ENCODE measurements at regions of chr3 and their contacts with region 1.

Region 1: GRCh38 chr3:150763122-150763841 is at the start of gene SIAH2:
- DNase-seq: peak; percentile 88 to 95
- H3K4me3 ChIP-seq: peak within 1 kb of the TSS; percentile 69
- H3K27ac ChIP-seq: peak within 1 kb of the TSS; percentile 84
- H3K4me1 ChIP-seq: peaks cover 55% of the 10 kb centered on the region
- H3K27me3 ChIP-seq: no peaks in the 10 kb centered on the region
- CTCF ChIP-seq: no peak
- total RNA-seq, gene SIAH2: 19.4 and 20.3 TPM in 2 replicates

Region 2: DNA sequence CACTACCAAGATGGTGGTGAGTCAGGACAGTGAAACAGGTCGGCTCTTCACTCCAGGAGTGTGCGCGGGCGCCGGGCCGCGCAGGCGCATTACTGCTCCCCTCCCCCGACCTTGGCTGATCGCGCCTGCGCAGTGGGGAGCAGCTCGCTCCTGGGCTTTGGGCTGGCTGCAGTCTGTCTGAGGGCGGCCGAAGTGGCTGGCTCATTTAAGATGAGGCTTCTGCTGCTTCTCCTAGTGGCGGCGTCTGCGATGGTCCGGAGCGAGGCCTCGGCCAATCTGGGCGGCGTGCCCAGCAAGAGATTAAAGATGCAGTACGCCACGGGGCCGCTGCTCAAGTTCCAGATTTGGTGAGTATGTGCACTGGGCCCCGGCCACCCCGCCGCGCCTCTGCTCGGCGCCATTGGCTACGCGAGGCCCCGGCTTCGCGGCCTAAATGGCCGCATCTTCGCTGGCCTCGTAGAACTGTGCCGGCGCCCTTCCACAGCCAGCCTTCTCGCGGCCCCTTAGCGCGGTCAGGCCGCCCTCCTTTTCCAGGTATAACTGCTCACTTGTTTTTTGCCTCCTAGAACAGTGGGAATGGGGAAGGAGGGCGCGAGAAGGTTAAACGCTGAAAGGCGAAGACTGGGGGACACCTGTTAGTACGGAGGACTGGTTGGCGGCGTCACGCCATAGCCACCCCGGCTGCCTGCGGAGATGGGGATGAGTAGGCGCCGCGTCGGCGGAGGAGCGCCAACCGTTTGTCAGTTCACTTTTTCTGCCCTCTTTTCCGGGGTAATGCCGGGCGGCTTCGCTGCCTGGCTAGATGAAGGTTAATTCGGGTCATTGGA is 159.9 kb before region 1 on chr3 and contains the start of gene SELENOT:
- CTCF ChIA-PET with region 1: no interaction called
- POLR2A ChIA-PET with region 1: interaction called, 6 read pairs
- intact Hi-C with region 1: loop called (anchors 5 kb)
- DNase-seq: peak; percentile 88 to 98
- H3K4me3 ChIP-seq: peak within 1 kb of the TSS; percentile 94
- H3K27ac ChIP-seq: peak within 1 kb of the TSS; percentile 93
- H3K4me1 ChIP-seq: peaks cover 53% of the 10 kb centered on the region
- H3K27me3 ChIP-seq: no peaks in the 10 kb centered on the region
- CTCF ChIP-seq: peak; percentile 31; the same call in 1 of the 2 replicates
- total RNA-seq, gene SELENOT: 59.5 and 84.1 TPM in 2 replicates

Region 3: DNA sequence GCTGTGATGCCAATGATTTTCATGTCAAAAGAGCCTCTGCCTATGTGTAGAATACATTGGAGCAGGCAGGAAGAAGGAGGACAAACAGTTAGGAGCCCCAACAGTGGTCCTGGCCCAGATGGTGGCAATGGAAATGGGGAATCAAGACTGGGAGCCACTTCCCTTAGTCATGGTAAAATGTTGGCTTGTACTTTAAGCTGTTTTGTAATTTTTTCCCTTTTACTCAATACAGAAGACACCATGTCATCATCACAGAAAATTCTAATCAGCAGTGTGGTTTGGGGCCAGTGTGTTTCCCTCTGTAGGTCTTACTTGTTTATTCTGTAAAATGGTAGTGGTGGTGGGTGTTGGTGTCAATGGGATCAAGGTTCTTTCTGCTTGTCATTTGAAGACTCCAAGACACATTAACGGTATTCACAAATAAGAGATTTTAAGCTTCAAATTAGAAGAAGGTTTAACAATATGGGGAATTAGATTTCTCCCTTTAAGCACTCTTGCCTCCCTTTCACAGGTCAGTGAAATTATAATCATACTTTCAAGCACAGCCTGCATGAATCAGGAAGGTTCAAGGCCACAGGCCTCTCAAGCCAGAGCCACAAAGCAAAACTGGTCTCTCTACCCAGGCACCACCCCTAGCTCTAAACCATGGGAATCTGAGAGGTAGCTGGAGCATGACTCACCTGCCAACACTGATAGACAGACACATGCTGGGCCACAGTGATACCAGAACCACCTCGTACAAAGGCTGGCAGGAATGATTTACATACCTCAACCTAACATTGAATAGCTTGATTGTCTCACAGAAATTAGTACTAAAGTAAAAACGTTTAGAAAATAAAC is 25.2 kb before region 1 on chr3:
- CTCF ChIA-PET with region 1: no interaction called
- POLR2A ChIA-PET with region 1: no interaction called
- intact Hi-C with region 1: loop called (anchors 1 kb)
- DNase-seq: peak; percentile 64 to 71
- H3K4me3 ChIP-seq: no peak overlapping the region
- H3K27ac ChIP-seq: peak overlapping the region; percentile 64
- H3K4me1 ChIP-seq: peaks cover 30% of the 10 kb centered on the region
- H3K27me3 ChIP-seq: no peaks in the 10 kb centered on the region
- CTCF ChIP-seq: no peak

Region 4: GRCh38 chr3:150787741-150788370 is 24.6 kb after region 1 on chr3:
- CTCF ChIA-PET with region 1: interaction called, 3 read pairs
- POLR2A ChIA-PET with region 1: interaction called, 4 read pairs
- intact Hi-C with region 1: loop called (anchors 1 kb)
- DNase-seq: peak in 1 of 2 experiments; percentile 55
- H3K4me3 ChIP-seq: no peak overlapping the region
- H3K27ac ChIP-seq: no peak overlapping the region
- H3K4me1 ChIP-seq: peaks cover 18% of the 10 kb centered on the region
- H3K27me3 ChIP-seq: no peaks in the 10 kb centered on the region
- CTCF ChIP-seq: peak; percentile 51

Region 5: GRCh38 chr3:150870396-150870795 is 107.1 kb after region 1 on chr3:
- CTCF ChIA-PET with region 1: no interaction called
- POLR2A ChIA-PET with region 1: no interaction called
- intact Hi-C with region 1: loop called (anchors 1 kb)
- DNase-seq: no peak
- H3K4me3 ChIP-seq: no peak overlapping the region
- H3K27ac ChIP-seq: no peak overlapping the region
- H3K4me1 ChIP-seq: peaks cover 5% of the 10 kb centered on the region; the same call in 1 of the 2 replicates
- H3K27me3 ChIP-seq: no peaks in the 10 kb centered on the region
- CTCF ChIP-seq: no peak

Region 6: DNA sequence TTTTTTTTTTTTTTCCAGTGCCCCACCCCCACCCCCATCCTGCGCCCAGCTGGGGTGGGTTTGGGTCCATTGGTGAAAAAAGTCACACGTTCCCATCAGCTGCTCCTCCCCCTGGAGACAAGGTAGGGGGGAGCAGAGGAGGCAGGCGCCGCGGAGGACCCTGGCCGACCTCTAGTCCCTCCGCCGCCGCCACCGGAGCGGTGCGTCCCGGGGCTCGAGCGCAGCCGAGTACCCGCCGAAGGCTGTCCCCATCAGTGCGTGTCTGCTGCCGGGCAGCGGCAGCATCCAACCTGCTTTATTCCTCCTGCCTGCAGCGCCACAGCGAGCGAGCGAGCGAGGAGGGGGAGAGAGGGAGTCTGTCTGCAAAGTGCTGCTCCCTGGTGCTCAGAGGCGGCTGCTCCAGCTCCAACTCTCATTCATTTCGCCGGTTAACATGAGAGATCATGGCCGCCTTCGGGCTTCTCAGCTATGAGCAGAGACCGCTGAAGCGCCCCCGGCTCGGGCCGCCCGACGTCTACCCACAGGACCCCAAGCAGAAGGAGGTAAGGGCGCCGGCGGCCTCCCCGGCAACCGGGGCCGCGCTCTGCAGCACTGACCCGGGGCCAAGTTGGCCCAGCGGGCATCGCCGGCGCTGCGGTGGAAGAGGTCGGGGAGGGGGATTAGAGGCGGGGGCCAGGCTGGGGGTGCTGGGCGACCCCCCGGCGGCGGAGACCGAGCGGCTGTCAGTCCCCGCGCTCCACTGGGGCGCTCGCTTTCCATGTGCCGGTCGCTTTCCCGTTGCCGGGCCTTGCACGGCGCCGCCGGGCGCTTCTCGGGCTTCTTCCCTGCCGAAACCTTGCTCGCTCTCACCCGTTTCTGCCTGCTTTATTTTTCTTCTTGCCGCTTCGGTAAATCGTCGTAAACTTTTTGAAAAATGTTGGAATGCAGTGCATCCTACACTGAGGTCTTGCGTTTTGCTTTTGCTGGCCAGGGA is 323.5 kb after region 1 on chr3:
- CTCF ChIA-PET with region 1: no interaction called
- POLR2A ChIA-PET with region 1: no interaction called
- intact Hi-C with region 1: loop called (anchors 10 kb)
- DNase-seq: peak; percentile 62 to 73
- H3K4me3 ChIP-seq: peak overlapping the region; percentile 74
- H3K27ac ChIP-seq: no peak overlapping the region
- H3K4me1 ChIP-seq: no peaks in the 10 kb centered on the region
- H3K27me3 ChIP-seq: no peaks in the 10 kb centered on the region
- CTCF ChIP-seq: 0 out of 2 replicates have a peak, but pooled peaks have one; percentile 28

Measured in PC-9 (cell line).